K562 (cell line): ENCODE measurements at regions of chr1 and their contacts with region 1.

Region 1: GRCh38 chr1:61049850-61050540 is 32.4 kb upstream of the NFIA start:
- DNase-seq: peak; percentile 79 to 96 (median 81)
- ATAC-seq: peak; percentile 70
- H3K4me3 ChIP-seq: peak overlapping the region; percentile 65
- H3K27ac ChIP-seq: peak overlapping the region; percentile 82
- H3K4me1 ChIP-seq: peaks cover 44 to 56% of the 10 kb centered on the region in 2 experiments
- H3K27me3 ChIP-seq: no peaks in the 10 kb centered on the region
- CTCF ChIP-seq: peak; percentile 89 to 97 (median 94)
- EP300 ChIP-seq: peak; percentile 62
- POLR2A ChIP-seq: peak; percentile 58; the same call in 1 of the 2 replicates
- RAD21 ChIP-seq: peak; percentile 82

Region 2: GRCh38 chr1:60668585-60668984 is 381.4 kb before region 1 on chr1:
- CTCF ChIA-PET with region 1: no interaction called
- POLR2A ChIA-PET with region 1: no interaction called
- in situ Hi-C with region 1: no loop called
- intact Hi-C with region 1: no loop called
- DNase-seq: no peak
- ATAC-seq: no peak
- H3K4me3 ChIP-seq: no peak overlapping the region
- H3K27ac ChIP-seq: no peak overlapping the region
- H3K4me1 ChIP-seq: no peaks in the 10 kb centered on the region
- H3K27me3 ChIP-seq: no peaks in the 10 kb centered on the region
- CTCF ChIP-seq: no peak
- EP300 ChIP-seq: no peak
- POLR2A ChIP-seq: no peak
- RAD21 ChIP-seq: no peak

Region 3: GRCh38 chr1:60969971-60970509 is 80.0 kb before region 1 on chr1:
- CTCF ChIA-PET with region 1: no interaction called
- POLR2A ChIA-PET with region 1: interaction called, 3 read pairs
- in situ Hi-C with region 1: no loop called
- intact Hi-C with region 1: loop called (anchors 2 kb)
- DNase-seq: peak in 2 of 4 experiments; percentile 52 to 55
- ATAC-seq: peak; percentile 83
- H3K4me3 ChIP-seq: no peak overlapping the region
- H3K27ac ChIP-seq: no peak overlapping the region
- H3K4me1 ChIP-seq: peaks cover 3 to 19% of the 10 kb centered on the region in 2 experiments; a peak in 4 of 5 replicates
- H3K27me3 ChIP-seq: no peaks in the 10 kb centered on the region
- CTCF ChIP-seq: peak; percentile 45 to 74 (median 67); a peak in 5 of 6 replicates
- EP300 ChIP-seq: no peak
- POLR2A ChIP-seq: no peak
- RAD21 ChIP-seq: peak; percentile 76 to 89

Region 4: DNA sequence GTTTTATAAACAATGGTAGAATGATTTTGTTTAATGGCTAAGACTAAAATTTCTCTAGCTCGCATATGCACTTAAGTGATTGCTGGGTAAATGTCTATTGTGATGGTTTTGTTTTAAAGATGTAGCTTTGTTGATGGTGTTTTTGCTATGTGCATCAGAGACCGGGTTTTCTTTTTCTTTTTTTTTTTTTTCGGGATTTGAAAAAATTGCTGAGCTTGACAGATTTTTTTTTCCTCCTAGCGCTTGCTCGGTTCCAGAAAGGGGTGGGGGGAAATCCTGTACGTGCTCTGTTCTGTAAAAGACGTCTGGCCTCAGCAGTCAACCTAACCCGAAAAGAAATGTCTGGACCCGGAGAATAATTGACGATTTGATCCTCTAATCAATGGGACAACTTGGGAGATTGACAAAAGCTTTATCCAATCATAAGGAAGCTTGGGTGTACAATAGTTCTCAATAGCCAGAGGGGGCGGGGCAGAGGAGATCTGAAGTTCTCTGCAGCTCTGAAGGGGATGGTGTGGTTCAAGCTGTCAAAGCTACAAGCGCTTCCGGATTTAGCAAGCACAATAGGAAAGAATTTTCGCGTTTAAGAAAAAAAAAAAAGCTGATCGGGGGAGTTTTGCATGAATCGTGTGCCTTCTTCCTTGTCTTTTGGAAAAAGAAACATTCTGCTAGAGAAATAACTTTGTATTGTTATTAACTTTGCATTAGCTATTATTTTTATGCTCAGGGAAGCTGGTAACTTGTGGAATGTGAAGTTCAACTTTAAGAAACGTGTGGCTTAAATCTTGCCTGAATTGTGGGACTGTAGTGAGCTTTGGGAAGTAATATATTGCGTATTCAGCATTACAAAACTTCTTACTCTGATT is 27.9 kb after region 1 on chr1:
- CTCF ChIA-PET with region 1: no interaction called
- POLR2A ChIA-PET with region 1: interaction called, 18 read pairs
- in situ Hi-C with region 1: no loop called
- intact Hi-C with region 1: loop called (anchors 1 kb)
- DNase-seq: peak; percentile 77 to 99 (median 90)
- ATAC-seq: peak; percentile 63
- H3K4me3 ChIP-seq: peak overlapping the region; percentile 47
- H3K27ac ChIP-seq: peak overlapping the region; percentile 73
- H3K4me1 ChIP-seq: peaks cover 8 to 34% of the 10 kb centered on the region in 2 experiments; a peak in 4 of 5 replicates
- H3K27me3 ChIP-seq: no peaks in the 10 kb centered on the region
- CTCF ChIP-seq: no peak; a peak in 1 of 6 replicates
- EP300 ChIP-seq: no peak
- POLR2A ChIP-seq: 0 out of 2 replicates have a peak, but pooled peaks have one; percentile 36
- RAD21 ChIP-seq: no peak

Region 5: GRCh38 chr1:61102041-61102440 is 52.0 kb after region 1 on chr1:
- CTCF ChIA-PET with region 1: no interaction called
- POLR2A ChIA-PET with region 1: no interaction called
- in situ Hi-C with region 1: no loop called
- intact Hi-C with region 1: no loop called
- DNase-seq: no peak
- ATAC-seq: no peak
- H3K4me3 ChIP-seq: no peak overlapping the region
- H3K27ac ChIP-seq: peak overlapping the region; percentile 27; the same call in 1 of the 3 replicates
- H3K4me1 ChIP-seq: peaks cover 0 to 13% of the 10 kb centered on the region in 2 experiments; a peak in 3 of 5 replicates
- H3K27me3 ChIP-seq: no peaks in the 10 kb centered on the region
- CTCF ChIP-seq: no peak
- EP300 ChIP-seq: no peak
- POLR2A ChIP-seq: no peak
- RAD21 ChIP-seq: no peak

Region 6: DNA sequence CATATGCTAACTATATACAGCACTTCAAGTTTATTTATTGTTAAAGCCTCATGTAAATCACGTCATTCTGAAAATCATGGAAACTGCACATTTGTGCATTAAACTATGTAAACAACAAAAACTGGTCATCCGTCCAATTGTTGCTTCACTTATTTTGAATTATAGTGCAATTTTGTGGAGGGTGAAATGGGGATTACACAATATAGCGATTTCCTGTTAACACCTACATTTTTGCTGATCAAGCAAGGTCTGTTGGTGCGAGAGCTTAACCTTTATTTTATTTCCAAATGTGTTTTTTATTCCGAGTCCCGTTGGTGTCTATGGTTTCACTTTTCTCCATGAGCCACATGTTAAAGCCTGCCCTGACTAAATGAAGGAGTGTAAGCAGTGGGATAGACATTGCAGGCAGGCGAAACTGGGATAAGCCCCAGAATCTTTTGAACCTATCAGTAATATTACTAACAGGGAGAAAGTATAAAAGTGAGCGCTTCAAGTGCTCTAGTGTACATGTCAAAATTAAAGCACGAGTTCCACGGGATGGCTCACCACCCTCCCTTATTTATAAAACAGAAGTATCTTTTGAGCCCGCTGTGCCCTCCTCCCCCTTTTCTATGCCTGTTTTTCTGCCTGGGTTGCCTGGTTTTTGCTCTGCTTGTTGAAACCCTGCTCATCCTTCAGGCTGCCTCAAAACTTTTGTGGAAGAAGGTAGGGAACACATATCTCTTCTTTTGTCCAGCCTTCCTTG is 153.0 kb after region 1 on chr1:
- CTCF ChIA-PET with region 1: no interaction called
- POLR2A ChIA-PET with region 1: interaction called, 3 read pairs
- in situ Hi-C with region 1: no loop called
- intact Hi-C with region 1: loop called (anchors 5 kb)
- DNase-seq: no peak
- ATAC-seq: peak; percentile 35
- H3K4me3 ChIP-seq: no peak overlapping the region
- H3K27ac ChIP-seq: peak overlapping the region; percentile 52; the same call in 2 of the 3 replicates
- H3K4me1 ChIP-seq: peaks cover 3 to 20% of the 10 kb centered on the region in 2 experiments
- H3K27me3 ChIP-seq: no peaks in the 10 kb centered on the region
- CTCF ChIP-seq: no peak
- EP300 ChIP-seq: no peak
- POLR2A ChIP-seq: no peak
- RAD21 ChIP-seq: no peak

Region 7: DNA sequence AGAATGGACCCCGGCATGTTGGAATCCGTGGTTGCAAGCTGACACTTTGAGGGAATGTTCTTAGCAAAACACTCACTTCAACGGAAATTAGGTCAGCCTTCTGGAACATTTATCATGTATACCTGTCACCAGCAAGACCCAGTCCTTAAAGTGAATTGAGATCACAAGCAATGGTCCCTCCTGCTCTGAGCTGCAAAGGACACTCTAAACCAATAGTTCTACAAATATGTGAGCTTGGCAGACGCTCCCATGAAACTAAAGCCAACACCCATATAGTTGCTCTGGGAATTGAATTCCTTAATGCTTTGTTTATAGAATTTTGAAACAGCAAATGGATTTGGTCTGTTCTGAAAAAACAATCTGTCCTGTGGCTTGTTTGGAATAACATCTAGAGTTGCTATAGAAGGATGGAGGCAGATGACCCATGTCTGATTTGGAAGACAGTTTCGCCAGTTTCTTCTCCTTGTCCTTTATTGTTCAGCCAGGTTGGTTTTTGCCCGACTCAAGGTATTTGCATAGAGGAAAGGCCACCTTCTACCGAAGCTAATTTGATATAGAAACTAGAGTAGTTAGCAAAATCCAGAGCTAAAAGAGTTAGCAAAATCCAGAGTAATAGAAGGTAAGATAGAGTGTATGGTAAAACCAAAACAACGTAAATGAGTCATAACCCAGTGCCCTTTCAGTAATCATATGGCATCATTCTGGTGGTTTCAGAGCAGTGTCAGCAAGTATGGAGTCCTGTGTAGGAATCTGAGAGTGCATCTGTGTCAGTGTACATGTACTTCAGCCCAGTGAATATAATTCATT is 268.5 kb after region 1 on chr1:
- CTCF ChIA-PET with region 1: no interaction called
- POLR2A ChIA-PET with region 1: interaction called, 3 read pairs
- in situ Hi-C with region 1: no loop called
- intact Hi-C with region 1: loop called (anchors 5 kb)
- DNase-seq: peak in 3 of 4 experiments; percentile 17 to 74 (median 62)
- ATAC-seq: peak; percentile 88
- H3K4me3 ChIP-seq: no peak overlapping the region
- H3K27ac ChIP-seq: peak overlapping the region; percentile 63
- H3K4me1 ChIP-seq: peaks cover 0 to 26% of the 10 kb centered on the region in 2 experiments; a peak in 2 of 5 replicates
- H3K27me3 ChIP-seq: no peaks in the 10 kb centered on the region
- CTCF ChIP-seq: no peak
- EP300 ChIP-seq: no peak
- POLR2A ChIP-seq: no peak
- RAD21 ChIP-seq: peak in 1 of 2 experiments; percentile 33; a peak in 2 of 4 replicates

Region 8: DNA sequence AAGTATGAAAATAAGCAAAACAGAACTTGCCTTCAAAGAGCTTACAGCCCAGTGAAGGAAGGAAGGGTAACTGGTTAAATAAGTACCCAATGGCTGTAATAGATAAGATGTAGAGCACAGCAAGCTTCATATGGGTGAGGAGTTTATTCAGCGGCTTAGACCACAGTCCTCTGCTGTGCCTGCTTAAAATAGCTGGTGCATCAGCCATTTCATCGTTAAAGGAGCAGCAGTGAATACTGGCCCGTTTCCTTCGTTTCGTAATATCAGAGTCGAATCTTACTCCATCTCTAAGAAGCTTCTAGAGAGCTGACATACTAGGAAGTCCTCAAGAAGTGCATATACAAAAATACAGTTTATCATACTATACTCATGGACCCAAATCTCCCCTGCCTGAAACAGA is 318.9 kb after region 1 on chr1:
- CTCF ChIA-PET with region 1: no interaction called
- POLR2A ChIA-PET with region 1: no interaction called
- in situ Hi-C with region 1: no loop called
- intact Hi-C with region 1: no loop called
- DNase-seq: no peak
- ATAC-seq: no peak
- H3K4me3 ChIP-seq: no peak overlapping the region
- H3K27ac ChIP-seq: no peak overlapping the region
- H3K4me1 ChIP-seq: no peaks in the 10 kb centered on the region
- H3K27me3 ChIP-seq: no peaks in the 10 kb centered on the region
- CTCF ChIP-seq: no peak
- EP300 ChIP-seq: no peak
- POLR2A ChIP-seq: no peak
- RAD21 ChIP-seq: no peak

Region 9: DNA sequence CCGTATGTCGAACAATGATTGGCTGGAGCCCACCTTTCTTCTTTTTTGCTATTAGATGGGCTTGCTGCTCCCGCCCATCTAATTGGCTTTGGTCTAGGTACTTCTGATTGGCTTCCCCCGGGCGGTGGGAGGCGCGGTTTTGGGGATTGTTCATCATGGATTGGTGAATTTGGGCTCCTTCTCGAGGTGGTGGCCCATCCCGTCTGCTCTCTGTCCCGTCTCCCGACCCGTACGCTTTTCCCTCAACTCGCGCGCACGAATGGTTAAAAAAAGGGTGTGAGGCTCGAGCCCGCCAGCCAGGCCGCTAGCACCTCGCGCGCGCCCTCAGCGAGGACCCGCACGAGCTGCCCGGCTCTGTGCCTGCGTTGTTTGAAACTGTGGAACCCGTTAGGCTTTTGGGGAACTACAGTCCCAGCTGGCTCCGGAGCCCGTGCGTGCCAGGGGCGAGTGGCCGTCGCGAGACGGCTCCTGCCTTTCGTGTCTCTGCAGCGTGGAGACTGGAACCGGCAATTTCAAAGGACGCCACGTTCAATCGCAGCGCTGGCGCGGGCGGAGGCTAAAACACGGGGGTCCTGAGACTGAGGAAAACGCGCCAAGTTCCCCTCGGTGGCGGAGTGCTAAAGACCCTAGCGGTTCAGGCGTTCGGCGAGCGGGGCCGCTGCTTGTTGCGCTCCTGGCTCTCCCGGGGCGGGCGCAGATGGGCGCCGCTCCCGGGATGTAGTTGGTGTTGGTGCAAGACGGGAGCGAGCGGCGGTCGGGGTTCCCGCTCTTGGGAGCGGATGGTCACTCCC is 1386.7 kb after region 1 on chr1 and contains the start of gene USP1:
- CTCF ChIA-PET with region 1: no interaction called
- POLR2A ChIA-PET with region 1: interaction called, 3 read pairs
- in situ Hi-C with region 1: no loop called
- intact Hi-C with region 1: loop called (anchors 5 kb)
- DNase-seq: peak; percentile 95 to 98 (median 96)
- ATAC-seq: peak; percentile 86
- H3K4me3 ChIP-seq: peak within 1 kb of the TSS; percentile 89
- H3K27ac ChIP-seq: peak within 1 kb of the TSS; percentile 97
- H3K4me1 ChIP-seq: peaks cover 2 to 17% of the 10 kb centered on the region in 2 experiments; a peak in 4 of 5 replicates
- H3K27me3 ChIP-seq: peaks cover 0 to under 1% of the 10 kb centered on the region in 2 experiments; a peak in 1 of 5 replicates
- CTCF ChIP-seq: 0 out of 6 replicates have a peak, but pooled peaks of 1 of the 3 experiments have one; percentile 3
- EP300 ChIP-seq: no peak; the same call in 1 of the 2 replicates
- POLR2A ChIP-seq: peak; percentile 85
- RAD21 ChIP-seq: no peak
- polyA plus RNA-seq, gene USP1: 27.3 to 29.8 TPM